Heart left ventricle (tissue), 16 donors: ENCODE measurements at regions of chr1 and their contacts with region 1.

Region 1: GRCh38 chr1:167627865-167628641 is 2.0 kb upstream of the RCSD1 start:
- DNase-seq: peak in 4 of 5 donors; percentile 40 to 63 (median 44)
- ATAC-seq: peak in 3 of 4 donors; percentile 6 to 41 (median 35)
- H3K4me3 ChIP-seq: peak overlapping the region in 1 of 12 donors; percentile 96
- H3K27ac ChIP-seq: peak overlapping the region; percentile 84 to 99 (median 96)
- H3K4me1 ChIP-seq: peaks cover 6 to 53% (median 46%) of the 10 kb centered on the region in 12 donors
- H3K27me3 ChIP-seq: no peaks in the 10 kb centered on the region
- CTCF ChIP-seq: no peak
- POLR2A ChIP-seq: no peak

Region 2: DNA sequence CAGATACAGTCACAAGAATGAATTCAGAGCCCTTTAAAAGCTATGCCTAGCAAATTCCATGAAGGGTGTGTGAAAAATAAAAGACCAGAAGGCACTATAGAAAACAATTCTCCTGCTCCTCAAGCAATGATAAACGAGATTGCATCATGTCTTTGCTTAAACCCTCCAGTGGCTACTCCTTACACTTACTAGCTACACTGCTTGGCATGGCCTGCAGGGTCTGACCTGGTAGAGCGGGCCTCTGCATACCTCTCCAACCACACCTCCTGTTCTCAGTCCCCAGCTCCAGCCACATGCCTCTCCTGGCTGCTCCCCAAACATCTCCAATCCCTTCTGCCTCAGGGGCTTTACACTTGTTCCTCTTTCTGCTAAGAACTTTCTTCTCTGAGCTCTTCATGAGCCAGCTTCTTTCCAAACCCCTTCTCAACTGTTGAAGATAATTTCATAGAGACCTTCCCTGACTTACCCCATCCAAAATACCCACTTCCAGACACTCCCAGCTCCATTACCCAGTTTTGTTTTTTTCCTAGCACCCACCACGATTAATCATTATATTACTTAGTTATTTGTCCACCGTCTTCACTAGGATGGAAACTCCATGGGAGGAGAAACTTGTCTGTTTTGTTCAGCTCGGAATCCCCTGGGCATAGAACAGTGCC is 63.3 kb before region 1 on chr1:
- intact Hi-C with region 1: no loop called
- DNase-seq: peak in 2 of 5 donors; percentile 27 to 39
- ATAC-seq: peak; percentile 41 to 62 (median 47)
- H3K4me3 ChIP-seq: no peak overlapping the region
- H3K27ac ChIP-seq: peak overlapping the region in 1 of 12 donors; percentile 77
- H3K4me1 ChIP-seq: peaks cover 0 to 52% (median 16%) of the 10 kb centered on the region in 12 donors
- H3K27me3 ChIP-seq: no peaks in the 10 kb centered on the region
- CTCF ChIP-seq: no peak
- POLR2A ChIP-seq: no peak

Region 3: DNA sequence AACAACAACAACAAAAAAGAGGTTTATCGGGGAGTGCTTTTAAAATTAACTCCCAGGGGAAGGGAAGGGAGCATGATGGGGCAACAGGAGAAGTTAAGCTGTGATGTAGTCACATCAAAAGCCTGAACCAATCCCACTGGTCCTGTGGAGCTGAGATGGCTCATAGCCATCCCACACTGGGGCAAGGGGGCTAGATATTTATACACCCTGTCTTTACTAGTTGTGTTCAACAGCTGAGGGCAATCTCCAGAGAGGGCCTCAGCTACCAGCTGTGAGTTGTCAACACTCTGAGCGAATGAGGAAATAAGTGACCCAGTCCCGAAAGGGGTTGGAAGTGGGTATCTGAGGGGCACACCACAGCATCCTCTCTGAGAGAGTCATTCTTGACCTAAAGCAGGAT is 43.5 kb before region 1 on chr1:
- intact Hi-C with region 1: no loop called
- DNase-seq: no peak
- ATAC-seq: no peak
- H3K4me3 ChIP-seq: no peak overlapping the region
- H3K27ac ChIP-seq: no peak overlapping the region
- H3K4me1 ChIP-seq: peaks cover 0 to 16% (median 0%) of the 10 kb centered on the region in 12 donors
- H3K27me3 ChIP-seq: no peaks in the 10 kb centered on the region
- CTCF ChIP-seq: no peak
- POLR2A ChIP-seq: no peak

Region 4: DNA sequence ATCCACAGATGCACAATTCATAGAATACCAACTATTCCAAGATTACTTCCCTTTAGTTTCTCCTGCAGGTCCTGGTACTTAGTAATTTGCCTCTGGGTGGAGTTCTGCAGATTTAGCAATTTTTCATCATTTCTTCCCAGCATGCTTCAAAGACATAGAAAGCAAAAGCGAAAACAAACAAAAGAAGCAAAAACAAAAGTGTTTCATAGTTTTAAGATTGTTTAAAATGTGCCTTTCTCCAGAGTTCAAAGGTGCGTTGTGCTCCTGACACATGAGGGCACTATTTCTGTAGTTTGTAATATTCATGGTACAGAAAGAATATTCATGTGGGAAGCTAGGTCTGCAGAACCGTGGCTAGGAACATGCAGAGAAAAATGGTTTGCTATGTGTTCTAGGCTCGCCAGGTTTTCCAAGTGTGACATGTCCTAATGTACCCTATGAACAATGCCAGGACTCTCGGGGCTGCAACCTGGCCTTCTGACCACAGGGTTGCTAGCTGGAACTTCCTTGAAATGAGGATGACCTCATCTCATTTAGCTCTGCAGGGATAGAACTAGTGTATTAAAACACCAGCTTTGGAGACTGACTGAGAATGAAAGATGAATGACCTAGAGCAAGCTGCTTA is 28.0 kb before region 1 on chr1:
- intact Hi-C with region 1: loop called in 2 of 10 experiments (anchors 1 to 2 kb)
- DNase-seq: peak in 4 of 5 donors; percentile 41 to 57 (median 52)
- ATAC-seq: peak; percentile 83 to 86 (median 86)
- H3K4me3 ChIP-seq: peak overlapping the region in 1 of 12 donors; percentile 23
- H3K27ac ChIP-seq: peak overlapping the region in 6 of 12 donors; percentile 12 to 80 (median 52)
- H3K4me1 ChIP-seq: peaks cover 15 to 41% (median 31%) of the 10 kb centered on the region in 12 donors
- H3K27me3 ChIP-seq: no peaks in the 10 kb centered on the region
- CTCF ChIP-seq: peak; percentile 44 to 85 (median 72)
- POLR2A ChIP-seq: no peak

Region 5: GRCh38 chr1:167650269-167651160 is 22.5 kb after region 1 on chr1:
- intact Hi-C with region 1: loop called in 1 of 10 experiments (anchors 2 kb)
- DNase-seq: peak in 3 of 5 donors; percentile 51 to 65 (median 59)
- ATAC-seq: peak; percentile 19 to 59 (median 46)
- H3K4me3 ChIP-seq: no peak overlapping the region
- H3K27ac ChIP-seq: peak overlapping the region; percentile 19 to 88 (median 76)
- H3K4me1 ChIP-seq: peaks cover 22 to 97% (median 88%) of the 10 kb centered on the region in 12 donors
- H3K27me3 ChIP-seq: no peaks in the 10 kb centered on the region
- CTCF ChIP-seq: no peak
- POLR2A ChIP-seq: no peak

Region 6: DNA sequence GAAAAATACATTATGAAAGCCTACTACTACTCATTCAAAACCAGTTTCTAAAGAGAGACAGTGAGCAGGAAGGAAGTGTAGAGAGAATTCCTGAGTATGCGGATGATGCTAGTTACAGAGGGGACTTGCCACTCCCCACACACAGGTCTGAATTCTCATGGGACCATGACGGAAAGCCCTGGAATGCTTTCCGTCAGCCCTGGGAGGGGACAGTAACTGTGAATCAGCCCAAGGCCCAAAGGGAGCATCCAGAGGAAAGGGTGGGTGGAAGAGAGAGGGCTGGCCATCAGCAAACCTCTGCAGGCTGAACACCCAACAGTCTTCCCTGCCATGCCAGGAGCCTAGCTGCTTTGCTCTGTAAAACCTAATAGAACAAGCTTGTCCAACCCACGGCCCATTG is 38.4 kb after region 1 on chr1:
- intact Hi-C with region 1: loop called in 1 of 10 experiments (anchors 2 kb)
- DNase-seq: peak in 4 of 5 donors; percentile 52 to 78 (median 70)
- ATAC-seq: peak in 3 of 4 donors; percentile 13 to 75 (median 57)
- H3K4me3 ChIP-seq: no peak overlapping the region
- H3K27ac ChIP-seq: peak overlapping the region in 11 of 12 donors; percentile 9 to 80 (median 61)
- H3K4me1 ChIP-seq: peaks cover 38 to 96% (median 84%) of the 10 kb centered on the region in 12 donors
- H3K27me3 ChIP-seq: no peaks in the 10 kb centered on the region
- CTCF ChIP-seq: no peak
- POLR2A ChIP-seq: peak in 1 of 2 donors; percentile 19

Region 7: DNA sequence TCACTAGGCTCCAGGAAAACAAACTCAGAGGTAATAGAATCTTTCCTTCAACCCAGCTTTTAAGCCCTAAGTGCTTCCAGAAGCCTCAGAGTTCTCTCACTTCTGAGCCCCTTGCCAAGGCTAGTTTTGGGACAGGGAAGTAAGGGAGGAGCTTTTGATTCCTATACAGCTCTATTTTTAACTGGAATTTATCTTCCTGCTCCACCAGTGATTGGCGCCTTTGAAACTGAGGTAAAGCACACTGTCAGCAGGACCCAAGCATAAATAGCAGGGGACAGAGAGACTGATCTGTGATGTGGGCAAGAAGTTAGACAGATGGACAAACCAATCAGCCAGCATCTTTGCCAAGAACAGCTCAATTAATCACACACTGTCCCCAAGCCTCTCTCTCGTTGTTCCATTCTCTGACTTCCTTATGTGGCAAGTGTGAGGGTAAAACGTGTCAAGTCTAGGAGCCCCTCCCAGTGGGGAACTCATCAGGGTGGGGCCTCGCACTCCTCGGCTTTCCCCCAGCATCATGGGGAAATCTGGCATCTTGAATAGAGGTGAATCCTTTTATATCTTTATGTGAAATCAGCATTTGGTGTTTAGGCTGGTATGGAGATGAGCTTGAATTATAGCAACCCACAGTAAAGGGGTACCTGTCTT is 53.5 kb after region 1 on chr1:
- intact Hi-C with region 1: loop called in 8 of 10 experiments (anchors 1 to 10 kb)
- DNase-seq: peak in 3 of 5 donors; percentile 43 to 51 (median 50)
- ATAC-seq: peak; percentile 72 to 88 (median 82)
- H3K4me3 ChIP-seq: no peak overlapping the region
- H3K27ac ChIP-seq: peak overlapping the region; percentile 70 to 89 (median 84)
- H3K4me1 ChIP-seq: peaks cover 15 to 98% (median 76%) of the 10 kb centered on the region in 12 donors
- H3K27me3 ChIP-seq: no peaks in the 10 kb centered on the region
- CTCF ChIP-seq: no peak
- POLR2A ChIP-seq: peak in 1 of 2 donors; percentile 45